ENCODE measurements at regions of chr9 and their contacts with region 1.

Region 1: GRCh38 chr9:5450359-5451091 is at the start of gene CD274:
- DNase-seq: peak; percentile 82
- H3K4me3 Mint-ChIP-seq: peak within 1 kb of the TSS; percentile 94
- H3K27ac Mint-ChIP-seq: peak within 1 kb of the TSS; percentile 93
- H3K4me1 Mint-ChIP-seq: peaks cover 79% of the 10 kb centered on the region
- H3K27me3 Mint-ChIP-seq: no peaks in the 10 kb centered on the region
- total RNA-seq, gene CD274: 10.5 to 10.7 TPM

Region 2: GRCh38 chr9:5437254-5438216 is 13.0 kb before region 1 on chr9 and contains the start of gene PLGRKT:
- CTCF ChIA-PET with region 1: interaction called, 25 read pairs
- POLR2A ChIA-PET with region 1: interaction called, 6 read pairs
- DNase-seq: peak; percentile 95
- H3K4me3 Mint-ChIP-seq: peak within 1 kb of the TSS; percentile 87
- H3K27ac Mint-ChIP-seq: peak within 1 kb of the TSS; percentile 97
- H3K4me1 Mint-ChIP-seq: peaks cover 50% of the 10 kb centered on the region
- H3K27me3 Mint-ChIP-seq: no peaks in the 10 kb centered on the region
- total RNA-seq, gene PLGRKT: 35.0 to 35.7 TPM

Region 3: GRCh38 chr9:5479994-5480694 is 29.6 kb after region 1 on chr9:
- CTCF ChIA-PET with region 1: no interaction called
- POLR2A ChIA-PET with region 1: no interaction called
- DNase-seq: no peak
- H3K4me3 Mint-ChIP-seq: no peak overlapping the region
- H3K27ac Mint-ChIP-seq: no peak overlapping the region
- H3K4me1 Mint-ChIP-seq: peaks cover 5% of the 10 kb centered on the region
- H3K27me3 Mint-ChIP-seq: no peaks in the 10 kb centered on the region

Region 4: DNA sequence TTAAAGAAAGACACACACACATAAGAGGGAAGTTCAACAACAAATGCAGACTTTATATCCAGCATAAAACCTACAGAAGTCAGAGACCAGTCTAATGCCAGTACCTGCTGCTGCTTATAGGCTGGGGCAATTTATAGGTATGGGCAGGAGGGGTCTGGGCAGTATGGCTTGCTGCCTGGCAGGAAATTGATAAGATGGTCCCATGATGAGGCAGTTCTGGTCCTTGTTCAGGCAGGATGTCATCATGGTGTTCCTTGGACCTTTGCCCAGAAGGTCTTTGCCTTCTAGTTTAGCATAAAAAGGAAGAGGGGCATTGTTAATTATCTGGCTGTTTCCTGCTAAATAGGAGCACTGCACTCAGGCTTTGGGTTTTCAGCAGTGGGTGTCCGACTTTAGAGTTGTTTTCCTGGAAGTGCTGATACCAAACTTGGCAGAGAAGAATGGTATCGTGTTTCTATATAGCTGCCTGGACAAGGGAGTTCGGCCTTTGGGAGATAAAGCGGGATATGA is 49.4 kb after region 1 on chr9:
- CTCF ChIA-PET with region 1: no interaction called
- POLR2A ChIA-PET with region 1: no interaction called
- DNase-seq: no peak
- H3K4me3 Mint-ChIP-seq: no peak overlapping the region
- H3K27ac Mint-ChIP-seq: no peak overlapping the region
- H3K4me1 Mint-ChIP-seq: peaks cover 6% of the 10 kb centered on the region
- H3K27me3 Mint-ChIP-seq: no peaks in the 10 kb centered on the region

Region 5: GRCh38 chr9:5582835-5583195 is 132.3 kb after region 1 on chr9:
- CTCF ChIA-PET with region 1: interaction called, 18 read pairs
- POLR2A ChIA-PET with region 1: interaction called, 4 read pairs
- DNase-seq: peak; percentile 71
- H3K4me3 Mint-ChIP-seq: no peak overlapping the region
- H3K27ac Mint-ChIP-seq: peak overlapping the region; percentile 90
- H3K4me1 Mint-ChIP-seq: peaks cover 73% of the 10 kb centered on the region
- H3K27me3 Mint-ChIP-seq: no peaks in the 10 kb centered on the region

Region 6: GRCh38 chr9:5596173-5596572 is 145.6 kb after region 1 on chr9:
- CTCF ChIA-PET with region 1: interaction called, 22 read pairs
- POLR2A ChIA-PET with region 1: no interaction called
- DNase-seq: no peak
- H3K4me3 Mint-ChIP-seq: no peak overlapping the region
- H3K27ac Mint-ChIP-seq: no peak overlapping the region
- H3K4me1 Mint-ChIP-seq: peaks cover 24% of the 10 kb centered on the region
- H3K27me3 Mint-ChIP-seq: no peaks in the 10 kb centered on the region